Heart left ventricle (tissue), 16 donors: ENCODE measurements at regions of chr1 and their contacts with region 1.

Region 1: GRCh38 chr1:92858564-92859399 is 26.9 kb downstream of the RPL5 start:
- DNase-seq: peak in 2 of 5 donors; percentile 40 to 42
- ATAC-seq: peak; percentile 79 to 86 (median 82)
- H3K4me3 ChIP-seq: peak overlapping the region in 9 of 12 donors; percentile 21 to 53 (median 33)
- H3K27ac ChIP-seq: peak overlapping the region in 1 of 12 donors; percentile 33
- H3K4me1 ChIP-seq: peaks cover 0 to 14% (median 5%) of the 10 kb centered on the region in 12 donors
- H3K27me3 ChIP-seq: no peaks in the 10 kb centered on the region
- CTCF ChIP-seq: peak in 11 of 12 donors; percentile 89 to 99 (median 94)
- POLR2A ChIP-seq: no peak

Region 2: GRCh38 chr1:92461364-92462097 is 397.3 kb before region 1 on chr1:
- intact Hi-C with region 1: no loop called
- DNase-seq: no peak
- ATAC-seq: no peak
- H3K4me3 ChIP-seq: no peak overlapping the region
- H3K27ac ChIP-seq: peak overlapping the region in 1 of 12 donors; percentile 77
- H3K4me1 ChIP-seq: peaks cover 0 to 53% (median 0%) of the 10 kb centered on the region in 12 donors
- H3K27me3 ChIP-seq: no peaks in the 10 kb centered on the region
- CTCF ChIP-seq: no peak
- POLR2A ChIP-seq: no peak

Region 3: DNA sequence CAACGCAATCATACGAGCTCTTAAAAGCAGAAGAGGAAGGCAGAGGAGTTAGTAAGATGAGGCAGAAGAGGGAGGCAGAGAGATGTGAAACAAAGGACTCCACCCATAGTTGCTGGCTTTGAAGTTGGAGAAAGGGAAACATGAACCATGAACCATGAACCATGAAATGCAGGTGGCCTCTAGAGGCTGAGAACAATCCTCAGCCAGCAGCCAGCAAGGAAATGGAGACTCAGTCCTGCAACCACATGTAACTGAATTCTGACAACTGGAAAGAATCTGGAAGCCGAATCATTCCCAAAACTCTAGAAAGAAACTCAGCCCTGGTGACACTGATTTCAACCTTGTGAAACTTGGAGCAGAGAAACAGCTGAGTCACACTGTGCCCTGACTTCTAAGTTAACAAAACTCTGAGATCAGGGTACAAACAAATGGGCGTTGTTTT is 92.4 kb after region 1 on chr1:
- intact Hi-C with region 1: loop called in 2 of 10 experiments (anchors 10 kb)
- DNase-seq: no peak
- ATAC-seq: peak in 3 of 4 donors; percentile 22 to 55 (median 52)
- H3K4me3 ChIP-seq: no peak overlapping the region
- H3K27ac ChIP-seq: peak overlapping the region in 2 of 12 donors; percentile 46 to 80
- H3K4me1 ChIP-seq: peaks cover 0 to 51% (median 3%) of the 10 kb centered on the region in 12 donors
- H3K27me3 ChIP-seq: no peaks in the 10 kb centered on the region
- CTCF ChIP-seq: no peak
- POLR2A ChIP-seq: no peak

Region 4: DNA sequence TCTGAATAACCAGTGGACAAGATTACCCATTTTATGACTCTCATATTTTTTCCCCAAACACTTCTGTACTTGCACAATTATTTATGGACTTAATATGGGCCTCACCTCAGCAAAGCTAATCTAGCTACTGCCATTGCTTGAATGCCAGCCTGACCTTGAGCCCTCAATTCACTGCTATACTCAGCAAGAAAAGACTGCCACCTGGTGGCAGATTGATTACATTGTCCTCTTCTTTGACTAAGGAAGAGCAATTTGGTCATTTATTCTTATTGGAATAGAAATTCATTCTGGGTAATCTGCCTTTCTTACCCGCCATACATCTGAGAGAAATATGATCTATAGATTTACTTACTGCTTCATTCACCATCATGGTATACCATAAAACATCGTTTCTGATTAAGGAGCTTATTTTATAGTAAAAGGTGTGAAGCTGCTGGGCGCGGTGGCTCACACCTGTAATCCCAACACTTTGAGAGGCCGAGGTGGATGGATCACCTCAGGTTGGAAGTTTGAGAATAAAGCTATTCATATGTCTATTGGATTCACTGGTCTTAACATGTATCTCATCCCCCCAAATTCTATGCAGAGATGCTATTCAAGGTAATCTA is 135.4 kb after region 1 on chr1:
- intact Hi-C with region 1: loop called (anchors 1 to 2 kb)
- DNase-seq: peak in 4 of 5 donors; percentile 68 to 79 (median 74)
- ATAC-seq: peak; percentile 80 to 93 (median 88)
- H3K4me3 ChIP-seq: no peak overlapping the region
- H3K27ac ChIP-seq: no peak overlapping the region
- H3K4me1 ChIP-seq: peaks cover 0 to 8% (median 0%) of the 10 kb centered on the region in 12 donors
- H3K27me3 ChIP-seq: no peaks in the 10 kb centered on the region
- CTCF ChIP-seq: peak; percentile 85 to 93 (median 88)
- POLR2A ChIP-seq: no peak

Region 5: DNA sequence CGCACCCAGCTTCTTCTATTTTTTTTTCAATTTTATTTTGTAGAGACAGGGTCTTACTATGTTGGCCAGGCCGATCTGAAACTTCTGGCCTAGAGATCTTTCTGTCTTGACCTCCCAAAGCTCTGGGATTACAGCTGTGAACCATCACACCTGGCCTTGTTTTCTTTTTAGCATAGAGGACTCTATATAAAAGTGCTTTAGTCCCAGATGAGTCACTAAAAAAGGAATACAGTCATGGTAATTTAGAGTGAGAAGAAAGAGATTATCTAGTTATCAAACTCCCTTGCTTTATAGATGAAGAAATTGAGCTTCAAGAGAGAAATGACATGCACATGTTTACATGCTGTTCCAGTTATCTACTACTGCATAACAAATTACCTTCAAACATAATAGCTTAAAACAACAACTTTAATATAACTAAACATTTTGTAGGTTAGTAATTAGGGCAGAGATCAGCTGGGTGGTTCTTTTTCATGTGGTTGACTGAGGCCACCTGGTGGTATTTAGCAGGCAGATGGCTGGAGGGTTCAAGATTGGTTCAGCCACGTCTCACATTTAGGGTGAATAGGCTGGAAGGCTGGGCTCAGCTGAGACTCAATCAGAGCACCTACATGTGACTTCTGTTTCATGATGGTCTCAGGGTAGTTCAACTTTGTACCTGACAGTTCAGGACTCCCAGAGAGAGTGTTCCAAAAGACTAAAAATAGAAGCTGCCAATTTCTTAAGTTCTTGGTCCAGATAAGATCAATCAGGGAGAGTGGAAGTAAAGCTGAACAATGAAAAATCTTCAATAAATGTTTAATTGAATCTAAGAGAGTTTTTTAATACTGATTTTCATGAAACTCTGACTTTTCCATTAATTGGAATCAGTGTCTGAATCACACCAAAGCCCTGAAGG is 203.4 kb after region 1 on chr1:
- intact Hi-C with region 1: loop called in 3 of 10 experiments (anchors 2 to 10 kb)
- DNase-seq: no peak
- ATAC-seq: peak in 2 of 4 donors; percentile 49 to 57
- H3K4me3 ChIP-seq: no peak overlapping the region
- H3K27ac ChIP-seq: no peak overlapping the region
- H3K4me1 ChIP-seq: no peaks in the 10 kb centered on the region
- H3K27me3 ChIP-seq: peaks cover 0 to 4% (median 0%) of the 10 kb centered on the region in 9 donors
- CTCF ChIP-seq: peak in 11 of 12 donors; percentile 24 to 56 (median 47)
- POLR2A ChIP-seq: no peak

Region 6: DNA sequence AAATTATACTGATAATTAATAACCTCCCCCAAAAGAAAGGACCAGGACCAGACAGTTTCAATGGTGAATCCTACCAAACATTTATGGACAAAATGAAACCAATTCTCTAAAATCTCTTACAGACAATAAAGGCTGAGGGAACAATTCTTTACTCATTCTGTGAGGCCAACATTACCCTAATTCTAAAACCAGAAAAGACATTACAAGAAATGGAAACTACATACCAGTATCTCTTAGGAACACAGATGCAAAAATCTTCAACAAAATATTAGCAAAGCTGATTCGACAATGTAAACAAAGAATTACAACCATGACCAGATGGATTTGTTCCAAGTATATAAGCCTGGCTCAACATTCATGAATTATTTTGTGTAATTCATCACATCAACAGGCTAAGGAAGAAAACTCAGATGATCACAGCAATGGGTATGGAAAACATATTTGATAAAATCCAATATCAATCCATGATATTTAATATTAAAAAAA is 312.8 kb after region 1 on chr1:
- intact Hi-C with region 1: no loop called
- DNase-seq: no peak
- ATAC-seq: no peak
- H3K4me3 ChIP-seq: no peak overlapping the region
- H3K27ac ChIP-seq: no peak overlapping the region
- H3K4me1 ChIP-seq: peaks cover 0 to 27% (median 11%) of the 10 kb centered on the region in 12 donors
- H3K27me3 ChIP-seq: no peaks in the 10 kb centered on the region
- CTCF ChIP-seq: no peak
- POLR2A ChIP-seq: no peak